Head of caudate nucleus (tissue), 42 donors: ENCODE measurements at regions of chr7 and their contacts with region 1.

Region 1: GRCh38 chr7:143214789-143215679 is 6.8 kb upstream of the TAS2R40 start:
- DNase-seq: peak in 39 of 42 donors; percentile 14 to 87 (median 61)

Region 2: GRCh38 chr7:142853739-142854371 is 361.2 kb before region 1 on chr7:
- intact Hi-C with region 1: loop called (anchors 10 kb)
- DNase-seq: peak; percentile 60 to 88 (median 73)

Region 3: DNA sequence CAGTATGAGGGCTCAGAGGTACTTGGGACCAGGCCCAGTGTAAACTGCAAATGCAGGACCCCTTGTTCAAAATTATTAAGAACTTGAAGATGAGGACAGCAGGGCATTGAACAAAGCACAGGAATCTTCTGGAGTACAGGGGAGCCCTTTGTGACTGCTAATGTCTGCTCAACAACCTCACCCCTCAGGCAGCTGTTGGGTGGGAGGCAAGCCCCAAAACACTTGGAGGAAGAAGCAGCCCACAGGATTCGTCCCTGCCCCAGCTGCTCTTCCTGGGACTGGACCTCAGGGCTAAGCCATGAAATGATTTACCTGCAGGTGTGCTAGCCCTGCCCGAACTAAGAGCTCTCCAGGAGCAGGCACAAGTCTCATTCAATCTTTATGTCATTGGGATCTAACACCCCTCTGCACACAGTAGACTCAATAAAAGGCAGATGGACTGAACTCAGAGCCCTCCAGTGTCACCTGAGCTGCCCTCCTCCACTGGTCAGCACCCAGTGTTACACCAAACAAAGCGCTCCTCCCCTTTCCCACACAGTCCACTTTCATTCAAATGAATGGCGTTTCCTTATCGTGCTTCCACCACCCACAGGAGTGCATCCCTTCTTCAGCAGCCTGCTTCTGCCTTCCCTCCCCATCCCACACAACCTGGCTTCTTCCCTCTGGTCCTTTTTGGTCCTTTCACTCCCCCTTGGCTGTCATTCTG is 282.5 kb before region 1 on chr7:
- intact Hi-C with region 1: no loop called
- DNase-seq: no peak

Region 4: GRCh38 chr7:143008007-143008901 is 206.8 kb before region 1 on chr7:
- intact Hi-C with region 1: loop called (anchors 1 kb)
- DNase-seq: peak; percentile 53 to 95 (median 87)

Region 5: DNA sequence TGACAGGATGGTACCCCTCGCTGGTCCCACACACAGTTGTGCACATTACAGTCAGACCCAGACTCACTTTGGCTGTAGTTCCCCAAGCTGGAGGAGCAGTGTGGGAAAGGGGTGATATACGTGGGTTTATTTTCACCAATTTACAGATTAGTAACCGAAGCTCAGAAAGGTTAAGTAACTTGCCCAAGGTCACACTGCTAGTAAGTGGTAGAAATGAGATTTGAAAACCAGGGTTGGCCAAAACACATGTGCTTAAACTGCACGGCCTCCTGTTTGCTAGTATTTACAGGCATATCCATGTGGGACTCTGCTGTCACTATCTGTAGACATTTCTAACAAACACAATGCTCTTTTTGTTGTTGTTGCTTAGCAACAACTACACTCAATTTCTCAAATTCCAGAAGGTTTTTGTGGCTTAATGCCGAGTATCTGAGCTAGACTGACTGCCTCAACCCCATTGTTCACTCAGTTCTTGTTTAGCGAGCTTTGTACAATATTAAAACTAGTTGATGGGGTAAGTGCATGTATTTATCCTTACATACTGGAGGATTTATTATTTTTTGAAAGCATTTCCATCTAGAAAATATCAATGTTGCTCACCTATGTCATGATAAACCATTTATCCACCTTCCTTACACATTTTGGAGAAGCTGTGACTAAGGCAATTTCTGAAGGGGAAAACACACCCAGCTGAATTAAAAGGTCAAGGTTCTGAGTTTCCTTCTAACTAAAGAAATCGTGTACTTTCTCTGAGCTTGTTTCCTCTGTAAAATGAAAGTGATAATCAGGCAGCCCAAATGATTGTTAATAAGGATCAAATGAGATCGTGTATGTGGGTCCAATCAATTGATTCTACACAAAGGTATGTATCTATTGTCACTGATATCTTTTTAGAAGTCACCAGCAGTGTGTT is 64.4 kb after region 1 on chr7:
- intact Hi-C with region 1: no loop called
- DNase-seq: peak in 11 of 42 donors; percentile 28 to 80 (median 45)